ENCODE measurements at regions of chr3 and their contacts with region 1.

Region 1: DNA sequence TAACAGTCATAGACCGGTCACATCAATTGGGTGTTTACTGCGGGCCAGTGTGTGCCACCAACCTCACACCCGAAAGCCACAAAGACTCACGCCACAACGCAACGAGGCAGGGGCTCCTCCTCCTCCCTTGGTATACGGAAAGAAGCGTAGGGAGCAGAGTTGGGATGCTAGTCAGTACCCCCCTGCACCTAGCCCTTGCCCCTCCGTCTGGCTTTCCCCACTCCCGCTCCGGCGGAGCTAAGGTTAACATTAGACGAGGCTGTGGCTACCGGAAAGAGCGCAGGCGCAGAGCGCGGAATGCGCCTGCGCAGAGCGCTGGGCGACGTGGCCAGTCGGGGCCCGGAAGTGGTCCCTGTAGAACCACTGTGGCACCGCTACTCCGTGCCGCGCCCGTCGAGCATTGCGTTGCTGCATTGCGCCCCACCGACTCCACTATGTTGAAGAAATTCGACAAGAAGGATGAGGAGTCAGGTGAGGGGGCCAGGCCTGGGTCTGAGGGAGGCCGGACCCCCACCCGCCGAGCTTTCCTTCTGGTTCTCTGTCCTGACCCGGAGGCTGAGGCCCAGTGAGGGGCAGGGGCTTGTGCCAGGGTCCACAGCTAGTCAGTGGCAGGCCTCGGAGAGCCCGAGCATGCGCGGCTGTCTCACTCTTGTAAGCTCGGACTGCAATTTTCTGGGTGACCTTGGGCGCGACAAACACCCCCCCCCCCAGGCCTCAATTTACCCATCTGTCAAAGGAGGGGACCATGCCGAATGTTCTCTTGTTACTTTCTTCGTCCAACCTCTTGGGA is at the start of gene COPG1:
- DNase-seq: peak; percentile 75
- H3K4me3 ChIP-seq: peak within 1 kb of the TSS; percentile 100
- H3K27ac ChIP-seq: peak within 1 kb of the TSS; percentile 97
- H3K27me3 ChIP-seq: no peaks in the 10 kb centered on the region
- CTCF ChIP-seq: no peak
- polyA plus RNA-seq, gene COPG1: 229 and 231 TPM in 2 replicates

Region 2: DNA sequence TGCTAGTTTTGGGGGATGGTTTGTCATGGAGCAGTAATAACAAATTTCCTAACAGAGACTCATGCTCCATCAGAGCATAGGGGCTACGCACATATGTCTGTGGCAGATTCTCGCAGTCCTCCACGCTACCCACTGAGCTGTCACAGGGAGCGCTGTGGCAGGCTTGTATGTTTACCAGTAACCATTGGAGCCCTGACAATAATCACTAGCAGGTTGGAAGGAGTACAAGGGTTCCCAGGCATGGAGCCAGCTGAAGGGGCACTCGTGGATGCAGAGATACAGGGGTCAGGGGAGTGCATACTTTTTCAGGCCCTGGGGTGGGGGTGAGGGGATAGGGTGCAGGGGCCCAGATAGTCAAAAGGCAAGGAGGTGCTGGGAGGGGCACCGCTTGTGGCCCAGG is 196.8 kb before region 1 on chr3:
- CTCF ChIA-PET with region 1: interaction called, 51 read pairs
- POLR2A ChIA-PET with region 1: interaction called, 4 read pairs
- DNase-seq: no peak
- H3K4me3 ChIP-seq: no peak overlapping the region
- H3K27ac ChIP-seq: no peak overlapping the region
- H3K27me3 ChIP-seq: peaks cover 17% of the 10 kb centered on the region
- CTCF ChIP-seq: no peak

Region 3: DNA sequence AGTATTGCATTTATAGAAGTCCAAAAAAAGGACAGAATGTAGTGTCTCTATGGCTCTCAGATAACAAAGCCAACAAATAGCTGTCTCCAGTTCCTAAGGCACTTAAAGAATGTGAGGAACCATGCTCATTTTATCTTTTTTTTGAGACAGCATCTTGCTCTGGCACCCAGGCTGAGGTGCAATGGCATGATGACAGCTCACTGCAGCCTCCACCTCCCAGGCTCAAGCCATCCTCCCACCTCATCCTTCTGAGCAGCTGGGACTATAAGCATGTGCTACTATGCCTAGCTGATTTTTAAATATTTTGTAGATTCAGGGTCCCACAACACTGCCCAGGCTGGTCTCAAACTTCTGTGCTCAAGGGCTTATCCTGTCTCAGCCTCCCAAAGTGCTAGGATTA is 104.7 kb before region 1 on chr3:
- CTCF ChIA-PET with region 1: interaction called, 10 read pairs
- POLR2A ChIA-PET with region 1: interaction called, 8 read pairs
- DNase-seq: no peak
- H3K4me3 ChIP-seq: no peak overlapping the region
- H3K27ac ChIP-seq: no peak overlapping the region
- H3K27me3 ChIP-seq: no peaks in the 10 kb centered on the region
- CTCF ChIP-seq: no peak

Region 4: DNA sequence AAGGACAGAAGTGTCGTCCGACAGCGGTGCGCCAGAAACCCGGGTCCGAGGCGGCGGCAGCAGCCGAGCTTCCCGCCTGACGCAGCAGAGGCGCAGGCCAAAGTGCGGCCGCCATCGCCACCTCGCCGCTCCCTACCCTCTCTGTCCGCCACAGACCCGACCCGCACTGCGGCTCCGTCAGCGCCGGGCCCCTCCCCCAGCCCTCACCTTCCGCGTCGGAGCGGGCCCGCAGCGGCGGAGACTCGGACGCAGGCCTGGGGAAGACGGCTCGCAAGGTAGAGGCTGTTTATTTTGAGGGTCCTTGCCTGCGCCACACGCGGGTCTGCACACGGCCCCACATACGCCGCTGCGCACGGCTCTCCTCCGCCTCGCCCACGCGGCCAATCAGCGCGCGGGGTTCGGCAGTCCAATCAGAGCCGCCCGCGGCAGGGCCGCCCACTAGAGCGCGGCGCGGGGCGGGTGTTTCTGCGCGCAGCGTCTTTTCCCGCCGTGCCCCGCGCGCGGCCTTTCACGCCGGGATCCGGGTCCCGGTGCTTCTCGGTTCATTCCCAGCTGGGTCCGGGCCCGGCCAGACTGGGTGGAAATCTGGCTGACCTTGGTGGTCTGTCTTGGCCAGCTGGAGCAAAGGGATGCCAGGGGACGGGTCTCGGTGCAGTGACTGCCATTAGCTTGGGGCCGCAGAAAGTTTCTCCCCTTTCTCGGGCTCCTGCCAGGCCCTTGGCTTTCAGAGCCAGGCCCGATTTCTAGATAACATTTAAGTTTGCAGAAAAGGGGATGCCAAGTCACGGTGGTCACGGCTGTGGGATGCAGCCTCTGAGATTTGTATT is 65.7 kb before region 1 on chr3 and contains the start of gene CNBP:
- CTCF ChIA-PET with region 1: interaction called, 25 read pairs
- POLR2A ChIA-PET with region 1: interaction called, 6 read pairs
- DNase-seq: peak; percentile 82
- H3K4me3 ChIP-seq: peak within 1 kb of the TSS; percentile 96
- H3K27ac ChIP-seq: peak within 1 kb of the TSS; percentile 81
- H3K27me3 ChIP-seq: no peaks in the 10 kb centered on the region
- CTCF ChIP-seq: no peak
- polyA plus RNA-seq, gene CNBP: 265 and 305 TPM in 2 replicates

Region 5: GRCh38 chr3:129224984-129225393 is 24.5 kb before region 1 on chr3:
- CTCF ChIA-PET with region 1: interaction called, 21 read pairs
- POLR2A ChIA-PET with region 1: interaction called, 3 read pairs
- DNase-seq: no peak
- H3K4me3 ChIP-seq: peak overlapping the region; percentile 35
- H3K27ac ChIP-seq: peak overlapping the region; percentile 77
- H3K27me3 ChIP-seq: no peaks in the 10 kb centered on the region
- CTCF ChIP-seq: no peak

Region 6: DNA sequence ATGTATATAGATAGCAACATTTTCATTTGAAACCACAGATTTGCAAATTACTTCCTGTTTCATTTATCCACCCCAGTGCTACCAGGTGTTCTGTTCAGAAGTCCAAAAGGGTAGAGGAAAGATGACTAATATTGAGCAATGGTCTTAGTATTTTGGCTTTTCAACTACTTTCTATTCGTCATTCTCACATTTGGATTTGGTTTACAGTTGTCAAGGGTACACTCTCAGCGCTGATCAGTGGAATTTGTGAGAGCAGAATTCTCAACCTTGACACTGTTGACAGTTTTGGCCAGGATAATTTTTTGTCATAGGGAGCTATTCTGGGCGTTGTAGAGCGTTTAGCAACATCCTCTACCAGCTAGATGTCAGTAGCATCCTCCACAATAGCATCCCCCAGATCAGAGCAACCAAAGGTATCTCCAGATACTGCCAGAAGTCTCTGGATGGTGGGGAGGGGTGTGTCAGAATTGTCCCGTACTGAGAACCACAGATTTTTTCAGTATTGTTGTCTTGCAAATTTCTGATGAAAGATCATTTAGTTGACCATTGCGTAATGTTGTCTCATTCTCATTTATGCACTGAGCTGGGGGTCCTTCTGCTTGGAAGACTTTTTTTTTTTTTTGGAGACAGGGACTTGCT is 33.4 kb after region 1 on chr3:
- CTCF ChIA-PET with region 1: no interaction called
- POLR2A ChIA-PET with region 1: no interaction called
- DNase-seq: no peak
- H3K4me3 ChIP-seq: no peak overlapping the region
- H3K27ac ChIP-seq: no peak overlapping the region
- H3K27me3 ChIP-seq: no peaks in the 10 kb centered on the region
- CTCF ChIP-seq: no peak

Region 7: GRCh38 chr3:129481766-129482332 is 232.4 kb after region 1 on chr3:
- CTCF ChIA-PET with region 1: no interaction called
- POLR2A ChIA-PET with region 1: no interaction called
- DNase-seq: no peak
- H3K4me3 ChIP-seq: no peak overlapping the region
- H3K27ac ChIP-seq: no peak overlapping the region
- H3K27me3 ChIP-seq: no peaks in the 10 kb centered on the region
- CTCF ChIP-seq: no peak

Measured in AG04450 (cell line).